Activated T-helper 2 cell treated with anti-CD3 and anti-CD28 coated beads, Interferon-gamma antibody, Interleukin-2, Interleukin-4, amounts not matched to agents 10 μg/mL and 5 μg/mL and 100 μg/mL, durations not matched to agents 14 hours and 24 hours and 36 hours (primary cell): ENCODE measurements at regions of chr17 and their contacts with region 1.

Region 1: GRCh38 chr17:68457539-68458259 is 403 bp upstream of the WIPI1 start:
- DNase-seq: peak; percentile 98
- H3K4me3 Mint-ChIP-seq: peak overlapping the region; percentile 78
- H3K27ac Mint-ChIP-seq: peak overlapping the region; percentile 63
- H3K4me1 Mint-ChIP-seq: peaks cover 70% of the 10 kb centered on the region
- H3K27me3 Mint-ChIP-seq: no peaks in the 10 kb centered on the region

Region 2: DNA sequence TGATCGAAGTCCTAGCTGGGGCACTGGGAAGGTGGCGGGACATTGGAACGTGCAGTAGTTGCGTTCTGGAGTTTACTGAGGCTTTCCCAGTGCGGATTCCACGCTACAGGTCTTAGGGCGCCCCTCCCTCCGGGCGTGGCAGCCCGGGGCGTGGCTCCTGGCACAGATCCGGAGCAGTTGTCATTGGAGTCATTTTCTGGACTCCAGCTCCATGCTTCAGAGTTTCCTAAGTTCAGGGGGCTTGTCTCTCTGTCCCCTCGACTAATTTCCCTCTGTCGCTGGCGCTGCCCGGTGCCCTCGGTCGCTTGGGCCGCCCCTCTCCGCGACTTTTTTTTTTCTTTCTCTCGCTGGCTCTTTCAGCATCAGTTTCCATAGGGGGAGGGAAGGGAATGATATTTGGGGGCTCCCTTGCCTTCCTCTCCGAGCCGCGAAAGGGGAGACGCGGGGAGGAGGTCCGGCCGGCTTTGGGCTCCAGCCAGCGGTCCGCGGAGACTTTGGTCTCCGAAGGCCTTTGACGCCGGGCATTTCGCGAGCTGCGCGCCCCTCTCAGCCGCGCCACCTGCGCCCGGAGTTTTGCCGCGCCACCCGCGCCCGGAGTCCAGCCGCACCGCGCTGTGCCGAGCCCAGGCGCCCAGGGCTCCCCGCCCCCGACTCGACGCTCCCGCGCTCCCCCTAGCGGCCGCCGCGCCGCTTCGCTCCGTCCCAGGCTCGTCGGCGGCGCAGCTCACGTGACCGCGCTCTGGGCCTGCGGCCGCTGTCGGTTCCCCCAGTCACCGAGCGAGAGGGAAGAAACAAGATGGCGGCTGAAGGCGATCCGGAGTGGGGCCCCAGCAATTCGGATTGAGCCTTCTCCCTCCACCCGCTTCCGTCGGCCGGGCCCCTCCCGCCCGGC is 632.7 kb before region 1 on chr17 and contains the start of gene BPTF:
- intact Hi-C with region 1: loop called (anchors 10 kb)
- DNase-seq: peak; percentile 89
- H3K4me3 Mint-ChIP-seq: peak within 1 kb of the TSS; percentile 98
- H3K27ac Mint-ChIP-seq: peak within 1 kb of the TSS; percentile 99
- H3K4me1 Mint-ChIP-seq: peaks cover 17% of the 10 kb centered on the region
- H3K27me3 Mint-ChIP-seq: peaks cover 6% of the 10 kb centered on the region
- total RNA-seq, gene BPTF: 90.8 and 91.2 TPM in 2 replicates

Region 3: GRCh38 chr17:68172461-68172954 is 285.2 kb before region 1 on chr17:
- intact Hi-C with region 1: loop called (anchors 2 kb)
- DNase-seq: peak; percentile 58
- H3K4me3 Mint-ChIP-seq: no peak overlapping the region
- H3K27ac Mint-ChIP-seq: no peak overlapping the region
- H3K4me1 Mint-ChIP-seq: peaks cover 29% of the 10 kb centered on the region
- H3K27me3 Mint-ChIP-seq: no peaks in the 10 kb centered on the region

Region 4: GRCh38 chr17:68205251-68205807 is 252.4 kb before region 1 on chr17:
- intact Hi-C with region 1: loop called (anchors 2 kb)
- DNase-seq: peak; percentile 90
- H3K4me3 Mint-ChIP-seq: peak overlapping the region; percentile 93
- H3K27ac Mint-ChIP-seq: peak overlapping the region; percentile 33
- H3K4me1 Mint-ChIP-seq: peaks cover 26% of the 10 kb centered on the region
- H3K27me3 Mint-ChIP-seq: peaks cover 9% of the 10 kb centered on the region

Region 5: GRCh38 chr17:68291844-68292695 is 165.6 kb before region 1 on chr17:
- intact Hi-C with region 1: loop called (anchors 10 kb)
- DNase-seq: peak; percentile 92
- H3K4me3 Mint-ChIP-seq: peak overlapping the region; percentile 81
- H3K27ac Mint-ChIP-seq: peak overlapping the region; percentile 84
- H3K4me1 Mint-ChIP-seq: peaks cover 60% of the 10 kb centered on the region
- H3K27me3 Mint-ChIP-seq: no peaks in the 10 kb centered on the region

Region 6: DNA sequence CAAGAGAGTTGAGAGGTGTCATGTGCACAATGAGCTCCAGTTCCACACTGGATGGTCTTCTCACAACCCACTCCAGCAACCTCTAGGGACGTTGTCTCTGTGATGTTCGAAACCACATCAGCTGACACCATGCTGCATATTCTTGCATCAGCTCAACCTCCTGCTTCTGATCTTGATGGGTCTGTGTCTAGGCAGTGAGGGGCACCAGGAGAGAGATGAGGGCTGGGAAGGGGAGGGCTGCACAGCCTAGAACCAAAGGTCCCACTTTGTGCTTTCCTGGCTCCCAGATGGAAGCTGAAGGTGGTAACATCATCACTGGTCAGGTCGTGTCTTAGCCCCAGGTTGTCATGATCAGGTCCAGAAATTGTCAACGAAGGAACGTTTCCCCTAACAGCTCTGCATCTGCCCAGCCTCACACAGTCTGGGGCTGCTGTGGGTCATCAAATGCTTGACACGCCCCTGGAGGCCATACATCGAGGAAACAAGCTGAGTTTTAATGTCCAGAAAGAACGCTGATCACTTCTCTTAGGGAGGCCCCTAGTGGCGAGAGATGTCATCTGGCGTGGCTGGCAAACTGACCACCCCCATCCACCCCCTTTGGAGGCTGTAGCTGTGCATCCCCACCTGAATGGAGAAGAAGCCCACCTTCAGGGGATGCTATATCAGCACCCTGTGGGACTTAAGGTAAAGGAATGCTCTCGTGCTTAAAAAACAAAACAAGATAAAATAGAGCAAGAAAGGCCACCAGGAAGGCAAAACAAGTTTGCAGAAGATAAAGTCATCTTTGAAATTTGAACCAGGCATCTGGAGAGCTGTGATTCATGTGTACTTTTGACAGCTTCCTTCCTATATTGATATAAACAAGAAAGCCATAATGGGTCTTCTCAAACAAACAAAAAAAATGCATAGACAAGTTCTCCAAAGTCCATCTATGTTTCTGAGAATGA is 58.7 kb before region 1 on chr17:
- intact Hi-C with region 1: loop called (anchors 5 kb)
- DNase-seq: peak; percentile 19
- H3K4me3 Mint-ChIP-seq: peak overlapping the region; percentile 39
- H3K27ac Mint-ChIP-seq: peak overlapping the region; percentile 84
- H3K4me1 Mint-ChIP-seq: peaks cover 31% of the 10 kb centered on the region
- H3K27me3 Mint-ChIP-seq: no peaks in the 10 kb centered on the region

Region 7: DNA sequence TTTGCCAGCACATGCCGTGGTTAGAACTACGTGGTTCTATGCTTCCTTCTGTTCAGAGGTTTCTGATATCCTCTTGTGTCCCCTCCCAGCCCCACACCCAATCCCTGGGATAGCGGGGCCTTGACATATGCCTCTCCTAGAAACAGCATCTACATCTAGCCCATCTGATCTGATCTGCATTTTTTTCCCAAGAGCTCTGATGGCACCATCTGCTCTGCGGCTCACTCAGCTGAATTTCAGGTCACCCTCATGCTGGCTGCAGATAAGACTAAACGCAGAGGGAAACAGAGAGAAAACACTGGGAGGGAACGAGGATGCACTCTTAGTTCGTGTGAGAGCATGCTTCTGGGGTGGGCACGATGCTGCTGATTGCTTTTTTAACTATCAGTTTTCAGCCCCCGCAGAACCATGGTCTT is 11.1 kb before region 1 on chr17:
- intact Hi-C with region 1: no loop called
- DNase-seq: no peak
- H3K4me3 Mint-ChIP-seq: no peak overlapping the region
- H3K27ac Mint-ChIP-seq: no peak overlapping the region
- H3K4me1 Mint-ChIP-seq: peaks cover 9% of the 10 kb centered on the region
- H3K27me3 Mint-ChIP-seq: no peaks in the 10 kb centered on the region

Region 8: GRCh38 chr17:68512247-68512982 is 54.7 kb after region 1 on chr17 and contains the start of gene PRKAR1A:
- intact Hi-C with region 1: loop called (anchors 1 kb)
- DNase-seq: peak; percentile 90
- H3K4me3 Mint-ChIP-seq: peak within 1 kb of the TSS; percentile 100
- H3K27ac Mint-ChIP-seq: peak within 1 kb of the TSS; percentile 100
- H3K4me1 Mint-ChIP-seq: peaks cover 59% of the 10 kb centered on the region
- H3K27me3 Mint-ChIP-seq: no peaks in the 10 kb centered on the region
- total RNA-seq, gene PRKAR1A: 263 and 265 TPM in 2 replicates